A549 (cell line): ENCODE measurements at regions of chr5 and their contacts with region 1.

Region 1: GRCh38 chr5:119418531-119419116 is 33.7 kb upstream of the HSD17B4 start:
- DNase-seq: no peak
- ATAC-seq: no peak
- H3K4me3 ChIP-seq: no peak overlapping the region
- H3K27ac ChIP-seq: no peak overlapping the region
- H3K4me1 ChIP-seq: no peaks in the 10 kb centered on the region
- CTCF ChIP-seq: no peak
- EP300 ChIP-seq: no peak
- POLR2A ChIP-seq: no peak
- RAD21 ChIP-seq: no peak

Region 2: GRCh38 chr5:119435436-119436132 is 17.0 kb after region 1 on chr5:
- CTCF ChIA-PET with region 1: interaction called, 10 read pairs
- POLR2A ChIA-PET with region 1: no interaction called
- DNase-seq: peak; percentile 33 to 72
- ATAC-seq: peak; percentile 87 to 89
- H3K4me3 ChIP-seq: no peak overlapping the region
- H3K27ac ChIP-seq: no peak overlapping the region
- H3K4me1 ChIP-seq: no peaks in the 10 kb centered on the region; the same call in 2 of the 3 replicates
- CTCF ChIP-seq: peak; percentile 57
- EP300 ChIP-seq: no peak
- POLR2A ChIP-seq: no peak
- RAD21 ChIP-seq: peak; percentile 59 to 64